ENCODE measurements at regions of chr1 and their contacts with region 1.

Region 1: DNA sequence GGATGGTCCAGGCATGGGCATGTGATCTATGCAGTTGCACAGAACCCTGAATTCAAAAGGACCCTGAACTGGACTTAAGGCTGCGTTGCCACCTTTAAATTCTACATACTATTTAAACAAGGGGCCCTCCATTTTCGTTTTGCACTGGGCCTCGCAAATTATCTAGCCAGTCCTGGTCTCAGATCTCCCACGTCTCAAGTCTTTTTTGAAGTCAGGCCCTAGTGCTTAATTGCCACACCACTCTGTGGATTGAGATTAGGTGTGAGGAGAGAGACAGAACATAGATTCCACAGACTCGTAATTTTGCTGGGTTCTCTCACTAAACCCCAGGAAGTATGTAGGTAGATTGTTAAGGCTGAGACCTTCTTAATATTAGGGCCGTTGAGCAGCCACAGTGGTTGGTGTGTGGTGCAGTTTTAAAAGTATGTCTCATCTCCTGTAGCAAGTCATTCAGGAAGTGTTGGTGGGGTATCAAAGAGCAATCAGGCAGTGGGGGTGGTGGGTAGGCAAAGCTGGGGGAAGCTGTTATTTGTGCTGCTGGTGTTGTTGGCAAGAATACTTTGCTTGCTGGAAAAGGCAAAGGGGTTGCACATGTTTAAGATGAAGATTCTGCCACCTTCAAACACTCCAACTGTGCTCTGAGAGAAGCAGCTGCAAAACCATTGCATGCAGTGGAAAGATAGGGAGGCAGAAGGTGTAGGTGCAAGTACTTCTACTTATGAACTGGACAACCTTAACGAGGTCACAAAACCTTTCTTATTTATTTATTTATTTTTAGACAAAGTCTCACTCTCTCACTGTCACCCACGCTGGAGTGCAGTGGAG is 11.2 kb downstream of the CD84 start:
- DNase-seq: peak; percentile 53
- ATAC-seq: peak; percentile 95
- H3K4me3 Mint-ChIP-seq: peak overlapping the region; percentile 81
- H3K27ac Mint-ChIP-seq: peak overlapping the region; percentile 99
- H3K4me1 Mint-ChIP-seq: peaks cover 62% of the 10 kb centered on the region
- H3K27me3 Mint-ChIP-seq: no peaks in the 10 kb centered on the region

Region 2: GRCh38 chr1:160451119-160451858 is 116.8 kb before region 1 on chr1:
- POLR2A ChIA-PET with region 1: no interaction called
- DNase-seq: no peak
- ATAC-seq: peak; percentile 27
- H3K4me3 Mint-ChIP-seq: peak overlapping the region; percentile 23
- H3K27ac Mint-ChIP-seq: peak overlapping the region; percentile 65
- H3K4me1 Mint-ChIP-seq: peaks cover 33% of the 10 kb centered on the region
- H3K27me3 Mint-ChIP-seq: no peaks in the 10 kb centered on the region

Region 3: GRCh38 chr1:160579216-160579701 is 11.2 kb after region 1 on chr1 and contains the start of gene CD84:
- POLR2A ChIA-PET with region 1: interaction called, 14 read pairs
- DNase-seq: no peak
- ATAC-seq: peak; percentile 21
- H3K4me3 Mint-ChIP-seq: peak within 1 kb of the TSS; percentile 91
- H3K27ac Mint-ChIP-seq: peak within 1 kb of the TSS; percentile 96
- H3K4me1 Mint-ChIP-seq: peaks cover 52% of the 10 kb centered on the region
- H3K27me3 Mint-ChIP-seq: no peaks in the 10 kb centered on the region
- total RNA-seq, gene CD84: 58.5 to 66.8 TPM

Measured in activated naive CD8-positive, alpha-beta T cell treated with anti-CD3 and anti-CD28 coated beads, Interleukin-2, amount 10 ng/mL, durations not matched to agents 7 days and 5 days (primary cell).